Caco-2 (cell line): ENCODE measurements at regions of chr5 and their contacts with region 1.

Region 1: DNA sequence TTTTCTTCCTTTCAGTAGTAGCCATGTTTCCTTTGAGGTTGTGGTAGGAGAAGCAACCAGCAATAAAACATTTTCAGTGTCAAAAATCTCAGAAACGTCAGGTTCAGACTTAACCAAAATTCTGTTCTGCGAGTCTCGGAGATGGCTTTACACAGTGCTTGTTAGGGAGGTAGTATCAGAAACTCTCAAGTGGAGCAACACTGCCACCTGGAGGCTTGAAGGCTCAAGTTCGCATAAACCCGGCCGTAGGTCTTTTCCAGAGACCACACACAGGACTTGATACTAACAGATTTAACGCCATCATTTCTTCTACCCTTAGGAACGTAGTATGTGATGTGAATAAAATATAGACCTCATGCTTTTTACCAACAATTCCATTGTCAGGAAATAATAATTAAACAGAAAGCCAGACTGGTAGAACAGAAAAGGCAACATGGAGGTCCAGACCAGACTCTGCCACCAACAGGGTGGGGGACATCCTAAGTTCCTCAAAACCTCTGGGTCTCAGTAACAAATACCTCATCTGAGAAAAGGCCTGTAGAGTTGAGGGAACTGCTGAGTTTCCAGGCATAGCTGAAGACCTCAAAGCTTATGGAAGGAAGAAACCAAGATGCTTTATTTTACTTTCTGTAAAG is 8.5 kb downstream of the PTGER4 start:
- DNase-seq: peak; percentile 77 to 82
- H3K4me3 ChIP-seq: no peak overlapping the region
- H3K4me3 Mint-ChIP-seq: no peak overlapping the region
- H3K27ac Mint-ChIP-seq: no peak overlapping the region
- H3K4me1 ChIP-seq: no peaks in the 10 kb centered on the region
- H3K4me1 Mint-ChIP-seq: no peaks in the 10 kb centered on the region
- H3K27me3 ChIP-seq: no peaks in the 10 kb centered on the region; the same call in 1 of the 2 replicates
- H3K27me3 Mint-ChIP-seq: peaks cover 2% of the 10 kb centered on the region
- CTCF ChIP-seq: peak; percentile 87 to 90

Region 2: DNA sequence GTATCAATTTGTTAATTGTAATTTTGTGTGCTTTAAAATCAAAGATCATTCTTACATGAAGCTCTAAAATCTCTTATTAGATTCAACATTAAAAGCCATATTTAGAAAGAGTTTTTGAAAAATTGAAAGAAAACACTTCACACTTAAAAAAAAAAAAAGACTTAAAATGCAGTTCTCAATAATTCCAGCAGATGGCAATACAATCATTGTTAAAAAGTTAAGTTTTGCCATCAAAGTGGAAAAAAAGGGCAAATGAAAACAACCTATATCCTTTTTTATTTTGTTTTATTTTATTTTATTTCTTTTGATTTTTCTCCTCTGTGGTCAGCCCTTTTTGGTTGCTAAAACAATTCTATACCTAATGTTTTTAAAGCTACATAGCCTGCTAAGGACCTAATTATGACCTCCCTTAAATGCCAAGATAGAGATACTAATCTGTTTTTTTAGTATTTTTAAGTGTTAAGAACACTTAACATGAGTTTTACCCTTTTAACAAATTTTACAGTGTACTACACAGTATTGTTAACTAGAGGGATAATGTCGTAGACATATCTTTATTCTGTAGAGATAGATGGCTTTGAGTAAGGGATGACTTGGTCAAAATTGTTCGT is 1109.3 kb before region 1 on chr5:
- CTCF ChIA-PET with region 1: no interaction called
- POLR2A ChIA-PET with region 1: no interaction called
- intact Hi-C with region 1: loop called (anchors 1 kb)
- DNase-seq: no peak
- H3K4me3 ChIP-seq: no peak overlapping the region
- H3K4me3 Mint-ChIP-seq: no peak overlapping the region
- H3K27ac Mint-ChIP-seq: peak overlapping the region; percentile 16
- H3K4me1 ChIP-seq: peaks cover 13% of the 10 kb centered on the region
- H3K4me1 Mint-ChIP-seq: peaks cover 13% of the 10 kb centered on the region
- H3K27me3 ChIP-seq: no peaks in the 10 kb centered on the region
- H3K27me3 Mint-ChIP-seq: no peaks in the 10 kb centered on the region
- CTCF ChIP-seq: peak; percentile 39 to 72

Region 3: DNA sequence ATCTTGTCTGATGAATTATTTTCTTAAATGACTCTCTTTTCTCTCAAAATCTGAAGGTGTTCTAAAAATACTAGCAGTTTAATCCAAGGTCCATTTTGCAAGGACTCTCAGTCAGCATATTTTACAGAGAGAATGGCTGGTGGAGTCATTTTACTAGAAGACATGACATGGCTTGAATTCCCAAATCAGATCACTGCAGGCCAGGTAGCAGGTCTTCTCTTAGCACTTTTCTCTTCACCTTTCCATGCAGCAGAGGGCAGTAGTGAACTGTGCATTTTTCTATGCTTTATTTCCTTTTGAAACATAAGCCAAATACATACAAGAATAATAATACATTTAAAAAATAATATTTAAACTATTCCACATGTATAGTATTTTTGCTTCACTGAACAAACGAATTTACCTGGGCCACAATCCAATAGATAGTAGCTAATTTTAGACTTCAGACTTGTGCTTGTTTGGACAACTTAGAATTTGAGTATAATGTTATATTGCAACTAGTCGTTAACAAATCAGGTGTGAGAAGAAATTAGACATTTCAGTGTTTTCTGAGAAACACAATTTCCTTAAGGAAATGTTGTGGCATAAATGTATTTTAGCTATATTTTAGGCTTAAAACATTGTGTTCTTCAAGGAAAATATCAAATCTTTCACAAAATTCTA is 974.1 kb before region 1 on chr5:
- CTCF ChIA-PET with region 1: no interaction called
- POLR2A ChIA-PET with region 1: no interaction called
- intact Hi-C with region 1: loop called (anchors 1 kb)
- DNase-seq: peak; percentile 43 to 56
- H3K4me3 ChIP-seq: no peak overlapping the region
- H3K4me3 Mint-ChIP-seq: no peak overlapping the region
- H3K27ac Mint-ChIP-seq: no peak overlapping the region
- H3K4me1 ChIP-seq: no peaks in the 10 kb centered on the region
- H3K4me1 Mint-ChIP-seq: peaks cover 10% of the 10 kb centered on the region
- H3K27me3 ChIP-seq: no peaks in the 10 kb centered on the region
- H3K27me3 Mint-ChIP-seq: peaks cover 2% of the 10 kb centered on the region
- CTCF ChIP-seq: peak; percentile 67

Region 4: DNA sequence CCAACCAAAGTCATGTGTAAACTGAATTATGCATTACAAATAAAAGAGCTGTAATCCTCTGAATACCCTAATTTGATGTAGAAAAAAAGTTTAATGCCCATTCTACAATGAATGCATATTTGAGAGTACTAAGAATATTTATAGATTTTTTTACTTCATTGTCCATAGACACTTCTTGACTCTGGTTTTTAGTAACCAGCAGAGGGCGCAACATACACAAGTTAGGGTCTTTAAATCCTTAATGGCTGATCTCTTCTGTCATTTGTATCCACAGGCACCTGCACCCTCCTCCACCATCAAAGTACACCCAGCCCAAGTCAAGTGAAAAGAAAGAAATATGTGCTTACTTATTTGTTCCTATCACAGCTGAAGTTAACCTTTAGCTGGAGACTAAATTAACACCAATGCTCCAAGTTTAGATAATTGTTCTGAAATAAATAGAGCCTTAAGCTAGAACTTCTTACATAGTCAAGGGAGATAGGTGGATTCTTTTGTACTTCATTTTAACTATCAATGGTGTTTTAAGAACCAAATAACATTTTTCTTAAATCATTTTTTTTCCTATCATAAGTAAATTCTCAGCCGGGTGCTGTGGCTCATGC is 739.3 kb before region 1 on chr5:
- CTCF ChIA-PET with region 1: no interaction called
- POLR2A ChIA-PET with region 1: no interaction called
- intact Hi-C with region 1: loop called (anchors 1 kb)
- DNase-seq: peak; percentile 49 to 59
- H3K4me3 ChIP-seq: no peak overlapping the region
- H3K4me3 Mint-ChIP-seq: no peak overlapping the region
- H3K27ac Mint-ChIP-seq: no peak overlapping the region
- H3K4me1 ChIP-seq: 0 out of 2 replicates have a peak, but pooled peaks cover 5% of the 10 kb centered on the region
- H3K4me1 Mint-ChIP-seq: no peaks in the 10 kb centered on the region
- H3K27me3 ChIP-seq: no peaks in the 10 kb centered on the region
- H3K27me3 Mint-ChIP-seq: peaks cover 6% of the 10 kb centered on the region
- CTCF ChIP-seq: peak; percentile 70

Region 5: DNA sequence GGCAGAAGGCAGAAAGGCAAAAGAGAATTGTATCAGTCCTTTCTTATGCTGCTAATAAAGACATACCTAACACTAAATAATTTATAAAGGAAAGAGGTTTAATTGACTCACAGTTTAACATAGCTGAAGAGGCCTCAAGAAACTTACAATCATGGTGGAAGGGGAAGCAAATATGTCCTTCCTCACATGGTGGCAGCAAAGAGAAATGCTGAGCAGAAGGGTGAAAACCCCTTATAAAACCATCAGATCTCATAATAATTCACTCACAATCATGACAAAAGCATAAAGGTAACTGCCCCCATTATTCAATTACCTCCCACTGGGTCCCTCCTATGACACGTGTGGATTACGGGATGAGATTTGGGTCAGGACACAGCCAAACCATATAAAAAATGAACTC is 321.0 kb before region 1 on chr5:
- CTCF ChIA-PET with region 1: no interaction called
- POLR2A ChIA-PET with region 1: no interaction called
- intact Hi-C with region 1: loop called (anchors 10 kb)
- DNase-seq: no peak
- H3K4me3 ChIP-seq: no peak overlapping the region
- H3K4me3 Mint-ChIP-seq: no peak overlapping the region
- H3K27ac Mint-ChIP-seq: no peak overlapping the region
- H3K4me1 ChIP-seq: no peaks in the 10 kb centered on the region
- H3K4me1 Mint-ChIP-seq: no peaks in the 10 kb centered on the region
- H3K27me3 ChIP-seq: no peaks in the 10 kb centered on the region
- H3K27me3 Mint-ChIP-seq: no peaks in the 10 kb centered on the region
- CTCF ChIP-seq: peak in 1 of 2 experiments; percentile 4

Region 6: GRCh38 chr5:40453689-40454088 is 234.6 kb before region 1 on chr5:
- CTCF ChIA-PET with region 1: no interaction called
- POLR2A ChIA-PET with region 1: no interaction called
- intact Hi-C with region 1: no loop called
- DNase-seq: no peak
- H3K4me3 ChIP-seq: no peak overlapping the region
- H3K4me3 Mint-ChIP-seq: no peak overlapping the region
- H3K27ac Mint-ChIP-seq: no peak overlapping the region
- H3K4me1 ChIP-seq: no peaks in the 10 kb centered on the region
- H3K4me1 Mint-ChIP-seq: no peaks in the 10 kb centered on the region
- H3K27me3 ChIP-seq: no peaks in the 10 kb centered on the region
- H3K27me3 Mint-ChIP-seq: peaks cover 3% of the 10 kb centered on the region
- CTCF ChIP-seq: no peak

Region 7: DNA sequence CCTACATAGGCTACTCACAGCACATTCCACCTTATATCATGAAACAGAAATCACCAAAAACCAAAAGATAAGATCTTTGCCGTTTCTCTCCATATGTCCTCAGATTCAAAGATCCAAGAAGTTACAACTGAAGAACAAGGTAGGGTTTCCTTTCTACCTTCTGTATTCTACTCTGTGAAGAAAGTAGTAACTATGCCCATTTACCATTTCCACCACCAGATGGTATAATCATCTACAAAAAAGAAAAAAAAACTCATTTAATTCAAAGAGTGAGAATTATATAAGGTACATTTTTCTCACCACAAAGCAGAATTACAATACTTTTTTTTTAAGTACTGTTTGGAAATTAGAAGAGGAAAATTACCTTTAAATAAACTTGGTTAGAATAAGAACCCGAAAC is 181.1 kb before region 1 on chr5:
- CTCF ChIA-PET with region 1: no interaction called
- POLR2A ChIA-PET with region 1: no interaction called
- intact Hi-C with region 1: loop called (anchors 1 kb)
- DNase-seq: no peak
- H3K4me3 ChIP-seq: no peak overlapping the region
- H3K4me3 Mint-ChIP-seq: no peak overlapping the region
- H3K27ac Mint-ChIP-seq: no peak overlapping the region
- H3K4me1 ChIP-seq: no peaks in the 10 kb centered on the region
- H3K4me1 Mint-ChIP-seq: no peaks in the 10 kb centered on the region
- H3K27me3 ChIP-seq: no peaks in the 10 kb centered on the region
- H3K27me3 Mint-ChIP-seq: no peaks in the 10 kb centered on the region
- CTCF ChIP-seq: no peak

Region 8: DNA sequence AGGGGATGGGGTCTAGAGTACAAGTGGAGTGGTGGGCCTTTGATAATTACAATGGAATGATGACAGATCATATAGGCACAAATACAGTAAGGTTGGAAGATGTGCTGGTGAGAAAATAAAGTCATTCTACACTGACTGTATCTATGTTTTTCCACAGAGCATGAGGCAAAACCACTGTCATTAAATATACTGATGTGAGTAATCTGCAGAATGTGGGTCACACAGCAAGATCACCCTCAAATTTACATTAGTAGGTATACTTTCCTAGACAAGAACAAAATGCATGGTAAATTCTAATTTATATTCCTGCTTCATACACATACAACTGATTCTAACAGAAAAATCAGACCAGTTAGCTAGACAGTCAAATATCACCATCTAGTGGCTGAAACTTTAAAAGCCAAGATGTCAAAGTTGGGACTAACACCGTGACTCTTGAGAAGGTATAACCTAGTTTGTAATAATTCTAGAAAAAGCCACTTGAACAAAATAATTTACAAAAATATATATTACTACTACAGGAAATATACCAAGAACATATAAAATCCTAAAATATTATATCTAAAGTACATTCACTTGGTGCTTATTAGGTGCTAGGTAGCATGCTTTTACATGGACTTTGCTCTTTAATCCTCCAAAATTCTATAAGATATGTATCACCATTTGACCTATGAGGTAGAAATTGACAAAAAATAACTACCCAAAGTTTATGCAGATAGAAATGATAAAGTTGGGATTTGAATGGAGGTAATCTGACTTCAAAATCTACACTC is 48.0 kb after region 1 on chr5:
- CTCF ChIA-PET with region 1: no interaction called
- POLR2A ChIA-PET with region 1: no interaction called
- intact Hi-C with region 1: loop called (anchors 1 kb)
- DNase-seq: peak in 1 of 2 experiments; percentile 42
- H3K4me3 ChIP-seq: no peak overlapping the region
- H3K4me3 Mint-ChIP-seq: no peak overlapping the region
- H3K27ac Mint-ChIP-seq: no peak overlapping the region
- H3K4me1 ChIP-seq: peaks cover 23% of the 10 kb centered on the region
- H3K4me1 Mint-ChIP-seq: peaks cover 23% of the 10 kb centered on the region
- H3K27me3 ChIP-seq: no peaks in the 10 kb centered on the region
- H3K27me3 Mint-ChIP-seq: no peaks in the 10 kb centered on the region
- CTCF ChIP-seq: peak; percentile 65 to 72